Endothelial cell of umbilical vein (primary cell): ENCODE measurements at regions of chr15 and their contacts with region 1.

Region 1: GRCh38 chr15:101167753-101168463 is 83.9 kb downstream of the CHSY1 start:
- DNase-seq: peak; percentile 95
- H3K4me3 ChIP-seq: peak overlapping the region in 1 of 3 experiments; percentile 19
- H3K27ac ChIP-seq: peak overlapping the region; percentile 98
- H3K4me1 ChIP-seq: peaks cover 37% of the 10 kb centered on the region
- H3K27me3 ChIP-seq: no peaks in the 10 kb centered on the region
- CTCF ChIP-seq: no peak
- POLR2A ChIP-seq: no peak

Region 2: DNA sequence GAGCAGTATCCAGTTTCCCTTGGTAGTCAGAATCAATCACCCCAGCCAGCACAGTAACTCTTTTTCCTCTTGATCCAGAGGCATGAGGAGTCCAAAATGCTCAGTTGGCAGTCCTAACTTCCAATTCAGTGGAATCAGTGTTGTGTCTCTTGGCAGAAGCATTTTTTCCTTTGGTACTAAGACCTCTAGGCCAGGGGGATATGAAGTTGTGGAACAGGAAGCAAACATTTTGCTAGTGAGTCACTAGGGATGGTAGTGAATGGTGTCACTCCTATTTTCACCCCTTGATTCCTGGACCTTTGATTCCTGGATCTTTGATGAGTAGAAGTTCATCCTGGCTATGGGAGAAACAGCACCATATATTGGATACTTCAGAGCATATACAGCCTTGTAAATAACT is 358.8 kb before region 1 on chr15:
- CTCF ChIA-PET with region 1: no interaction called
- POLR2A ChIA-PET with region 1: no interaction called
- dilution Hi-C with region 1: no loop called
- intact Hi-C with region 1: no loop called
- DNase-seq: peak; percentile 6
- H3K4me3 ChIP-seq: no peak overlapping the region
- H3K27ac ChIP-seq: no peak overlapping the region
- H3K4me1 ChIP-seq: no peaks in the 10 kb centered on the region
- H3K27me3 ChIP-seq: peaks cover 0 to 2% of the 10 kb centered on the region in 2 experiments
- CTCF ChIP-seq: no peak
- POLR2A ChIP-seq: no peak

Region 3: DNA sequence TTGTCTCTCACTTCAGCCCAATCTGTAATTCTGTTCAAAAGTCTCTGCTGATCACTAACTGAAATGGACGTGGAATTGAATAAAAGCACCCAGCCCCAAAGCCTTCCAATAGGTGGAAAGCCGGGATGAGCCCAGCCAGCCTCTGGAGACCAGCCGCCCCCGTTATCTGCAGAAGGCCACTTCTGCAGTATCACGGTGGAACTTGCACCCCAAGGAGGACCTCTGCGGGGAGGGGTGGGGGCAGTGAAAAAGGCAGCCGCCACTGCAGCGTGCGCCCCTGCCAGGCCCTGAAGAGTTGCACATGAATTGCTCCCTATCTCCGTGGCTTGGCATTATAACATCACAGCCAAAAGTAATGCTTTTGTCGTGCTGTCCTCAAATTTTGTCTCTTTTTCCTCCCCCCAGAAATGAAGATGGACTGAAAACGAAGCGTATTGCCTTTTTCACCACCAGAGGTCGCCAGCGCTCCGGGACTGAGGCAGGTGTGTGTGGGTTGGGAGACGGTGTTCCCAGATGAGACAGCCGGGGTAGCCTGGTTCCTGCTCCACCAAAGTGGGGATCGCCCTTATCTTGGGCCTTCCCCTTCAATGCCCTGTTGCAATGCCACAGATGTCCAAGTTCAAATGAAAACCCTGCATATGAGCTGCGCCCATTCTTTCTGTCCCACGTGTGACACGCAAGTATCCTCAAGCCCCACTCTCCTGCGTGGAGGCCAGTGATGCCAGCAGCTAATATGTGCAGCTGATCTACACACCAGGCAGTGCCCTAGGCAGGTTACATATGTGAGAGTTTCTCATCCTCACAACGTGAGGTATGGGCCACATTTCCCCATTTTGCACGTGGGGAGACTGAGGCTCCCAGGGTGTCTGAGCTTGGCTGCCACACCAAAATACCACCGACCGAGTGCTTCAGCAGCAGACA is 152.7 kb before region 1 on chr15:
- CTCF ChIA-PET with region 1: no interaction called
- POLR2A ChIA-PET with region 1: no interaction called
- dilution Hi-C with region 1: no loop called
- intact Hi-C with region 1: loop called (anchors 10 kb)
- DNase-seq: peak; percentile 59
- H3K4me3 ChIP-seq: no peak overlapping the region
- H3K27ac ChIP-seq: no peak overlapping the region
- H3K4me1 ChIP-seq: no peaks in the 10 kb centered on the region
- H3K27me3 ChIP-seq: no peaks in the 10 kb centered on the region
- CTCF ChIP-seq: peak; percentile 83 to 90
- POLR2A ChIP-seq: no peak

Region 4: GRCh38 chr15:101127506-101128076 is 40.3 kb before region 1 on chr15:
- CTCF ChIA-PET with region 1: interaction called, 15 read pairs
- POLR2A ChIA-PET with region 1: no interaction called
- dilution Hi-C with region 1: no loop called
- intact Hi-C with region 1: loop called (anchors 2 kb)
- DNase-seq: peak; percentile 94
- H3K4me3 ChIP-seq: no peak overlapping the region
- H3K27ac ChIP-seq: peak overlapping the region; percentile 63
- H3K4me1 ChIP-seq: peaks cover 20% of the 10 kb centered on the region
- H3K27me3 ChIP-seq: no peaks in the 10 kb centered on the region
- CTCF ChIP-seq: no peak
- POLR2A ChIP-seq: no peak

Region 5: GRCh38 chr15:101152914-101153313 is 15.0 kb before region 1 on chr15:
- CTCF ChIA-PET with region 1: interaction called, 23 read pairs
- POLR2A ChIA-PET with region 1: no interaction called
- dilution Hi-C with region 1: no loop called
- intact Hi-C with region 1: loop called (anchors 2 kb)
- DNase-seq: no peak
- H3K4me3 ChIP-seq: no peak overlapping the region
- H3K27ac ChIP-seq: no peak overlapping the region
- H3K4me1 ChIP-seq: peaks cover 4% of the 10 kb centered on the region
- H3K27me3 ChIP-seq: no peaks in the 10 kb centered on the region
- CTCF ChIP-seq: peak; percentile 45 to 57
- POLR2A ChIP-seq: no peak

Region 6: GRCh38 chr15:101183226-101183930 is 15.5 kb after region 1 on chr15:
- CTCF ChIA-PET with region 1: interaction called, 8 read pairs
- POLR2A ChIA-PET with region 1: interaction called, 8 read pairs
- dilution Hi-C with region 1: no loop called
- intact Hi-C with region 1: loop called (anchors 1 kb)
- DNase-seq: peak; percentile 90
- H3K4me3 ChIP-seq: peak overlapping the region in 1 of 3 experiments; percentile 8
- H3K27ac ChIP-seq: peak overlapping the region; percentile 57
- H3K4me1 ChIP-seq: peaks cover 49% of the 10 kb centered on the region
- H3K27me3 ChIP-seq: no peaks in the 10 kb centered on the region
- CTCF ChIP-seq: no peak
- POLR2A ChIP-seq: no peak